ENCODE measurements at regions of chr9 and their contacts with region 1.

Region 1: DNA sequence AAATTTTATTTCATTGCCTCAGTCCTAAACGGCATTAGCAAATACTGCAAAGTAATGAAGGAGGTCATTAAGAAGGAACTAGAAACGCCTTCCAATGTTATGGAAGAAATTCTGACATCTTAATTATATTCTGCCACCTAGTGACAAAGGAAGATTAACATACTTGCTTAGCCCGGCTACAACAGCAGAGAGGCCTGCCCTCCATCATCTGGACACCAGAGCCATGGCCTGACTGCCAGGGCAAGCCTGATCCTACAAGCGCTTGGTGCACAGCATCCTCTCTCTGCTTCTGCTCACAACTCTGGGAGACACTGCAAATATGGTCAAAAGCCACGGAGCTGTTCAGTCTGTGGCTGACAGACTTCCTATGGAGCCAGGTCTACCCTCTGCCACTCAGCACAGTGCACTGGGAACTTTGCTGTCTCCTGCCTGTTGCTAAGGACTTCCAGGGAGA is 87.3 kb upstream of the SLC44A1 start:
- DNase-seq: peak; percentile 67
- H3K4me3 Mint-ChIP-seq: no peak overlapping the region
- H3K27ac Mint-ChIP-seq: no peak overlapping the region
- H3K4me1 Mint-ChIP-seq: peaks cover 9% of the 10 kb centered on the region
- H3K27me3 Mint-ChIP-seq: no peaks in the 10 kb centered on the region
- CTCF ChIP-seq: peak; percentile 51

Region 2: GRCh38 chr9:104780799-104781395 is 376.3 kb before region 1 on chr9:
- CTCF ChIA-PET with region 1: interaction called, 17 read pairs
- POLR2A ChIA-PET with region 1: interaction called, 7 read pairs
- intact Hi-C with region 1: loop called (anchors 1 kb)
- DNase-seq: peak; percentile 71
- H3K4me3 Mint-ChIP-seq: no peak overlapping the region
- H3K27ac Mint-ChIP-seq: no peak overlapping the region
- H3K4me1 Mint-ChIP-seq: no peaks in the 10 kb centered on the region
- H3K27me3 Mint-ChIP-seq: no peaks in the 10 kb centered on the region
- CTCF ChIP-seq: peak; percentile 45

Region 3: DNA sequence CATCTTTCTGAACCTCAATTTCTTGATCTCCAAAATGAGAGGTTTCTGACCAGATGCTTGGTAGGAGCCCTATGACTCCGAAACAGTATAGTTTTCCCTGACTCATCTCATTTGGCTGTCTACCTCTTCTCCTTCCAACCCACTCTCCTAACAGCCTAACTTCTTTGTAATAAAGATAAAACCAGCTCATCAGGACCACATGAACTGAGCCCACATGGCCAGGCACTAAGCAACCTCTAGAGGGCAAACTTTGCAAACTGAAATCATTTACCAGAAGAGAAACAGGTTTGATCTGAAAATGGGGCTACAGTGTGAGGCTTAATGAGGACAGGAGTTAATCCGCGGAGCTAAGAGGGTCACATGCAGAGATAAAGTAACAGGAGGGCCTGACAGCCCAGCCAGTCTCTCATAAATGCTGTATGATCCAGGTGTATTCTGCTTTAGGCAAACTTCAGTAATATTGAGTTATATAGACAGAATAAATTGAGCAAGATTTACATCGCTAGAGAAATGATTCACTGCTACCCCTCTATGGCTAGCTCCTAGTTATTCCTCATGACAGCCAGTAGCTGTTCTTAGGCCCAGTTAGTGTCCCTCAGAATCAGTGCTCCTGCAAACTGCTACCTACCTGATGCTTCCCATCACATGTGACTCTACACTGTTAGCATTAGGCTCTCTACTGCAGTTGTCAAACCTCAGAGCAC is 293.8 kb before region 1 on chr9:
- CTCF ChIA-PET with region 1: interaction called, 115 read pairs
- POLR2A ChIA-PET with region 1: interaction called, 9 read pairs
- intact Hi-C with region 1: loop called (anchors 1 kb)
- DNase-seq: peak; percentile 83
- H3K4me3 Mint-ChIP-seq: no peak overlapping the region
- H3K27ac Mint-ChIP-seq: no peak overlapping the region
- H3K4me1 Mint-ChIP-seq: peaks cover 11% of the 10 kb centered on the region
- H3K27me3 Mint-ChIP-seq: no peaks in the 10 kb centered on the region
- CTCF ChIP-seq: peak; percentile 74

Region 4: DNA sequence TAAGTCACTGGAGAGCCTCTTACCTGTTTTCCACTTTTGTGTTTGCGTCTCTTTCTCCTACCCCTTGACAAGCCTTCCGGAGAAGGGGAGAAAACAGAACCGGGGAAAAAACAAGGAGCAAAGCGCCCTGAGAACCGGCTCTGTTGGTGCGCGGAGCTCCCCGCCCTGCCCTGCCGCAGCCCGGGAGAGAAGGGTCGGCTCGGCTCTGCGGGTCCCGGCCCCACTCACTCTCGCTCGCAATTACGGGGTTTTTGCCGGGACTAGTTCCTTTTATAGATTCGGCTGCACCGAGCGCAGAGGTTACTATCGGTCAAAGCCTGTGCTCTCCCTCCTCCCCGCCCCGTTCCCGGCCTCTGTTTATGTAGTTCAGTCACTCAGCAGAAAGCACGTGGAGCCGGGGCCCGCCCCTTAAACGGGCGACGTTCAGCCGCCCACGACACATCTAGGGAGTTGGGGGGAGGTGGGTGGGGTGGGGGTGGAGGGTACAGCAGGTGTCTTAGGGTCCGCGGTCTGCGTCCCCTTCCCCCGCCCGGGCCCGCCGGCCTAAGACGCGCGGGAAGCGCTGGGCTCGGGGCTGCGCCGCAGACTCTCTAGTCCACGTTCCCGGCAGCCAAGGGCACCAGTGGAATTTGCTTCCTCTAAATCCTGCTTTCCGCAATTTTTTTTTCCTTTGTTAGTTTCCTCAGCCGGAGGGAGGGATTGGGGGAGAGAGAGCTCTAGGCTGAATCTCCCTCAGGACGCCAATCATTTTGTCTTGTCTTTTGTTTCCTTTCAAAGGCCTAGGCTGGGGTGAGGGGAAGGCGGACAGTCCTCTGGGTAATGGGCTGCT is 229.0 kb before region 1 on chr9 and contains the start of gene ABCA1:
- CTCF ChIA-PET with region 1: interaction called, 3 read pairs
- POLR2A ChIA-PET with region 1: no interaction called
- intact Hi-C with region 1: loop called (anchors 1 kb)
- DNase-seq: peak; percentile 46
- H3K4me3 Mint-ChIP-seq: peak within 1 kb of the TSS; percentile 68
- H3K27ac Mint-ChIP-seq: no peak within 1 kb of the TSS
- H3K4me1 Mint-ChIP-seq: peaks cover 3% of the 10 kb centered on the region
- H3K27me3 Mint-ChIP-seq: no peaks in the 10 kb centered on the region
- CTCF ChIP-seq: no peak
- total RNA-seq, gene ABCA1: 0.15 and 0.28 TPM in 2 replicates

Region 5: DNA sequence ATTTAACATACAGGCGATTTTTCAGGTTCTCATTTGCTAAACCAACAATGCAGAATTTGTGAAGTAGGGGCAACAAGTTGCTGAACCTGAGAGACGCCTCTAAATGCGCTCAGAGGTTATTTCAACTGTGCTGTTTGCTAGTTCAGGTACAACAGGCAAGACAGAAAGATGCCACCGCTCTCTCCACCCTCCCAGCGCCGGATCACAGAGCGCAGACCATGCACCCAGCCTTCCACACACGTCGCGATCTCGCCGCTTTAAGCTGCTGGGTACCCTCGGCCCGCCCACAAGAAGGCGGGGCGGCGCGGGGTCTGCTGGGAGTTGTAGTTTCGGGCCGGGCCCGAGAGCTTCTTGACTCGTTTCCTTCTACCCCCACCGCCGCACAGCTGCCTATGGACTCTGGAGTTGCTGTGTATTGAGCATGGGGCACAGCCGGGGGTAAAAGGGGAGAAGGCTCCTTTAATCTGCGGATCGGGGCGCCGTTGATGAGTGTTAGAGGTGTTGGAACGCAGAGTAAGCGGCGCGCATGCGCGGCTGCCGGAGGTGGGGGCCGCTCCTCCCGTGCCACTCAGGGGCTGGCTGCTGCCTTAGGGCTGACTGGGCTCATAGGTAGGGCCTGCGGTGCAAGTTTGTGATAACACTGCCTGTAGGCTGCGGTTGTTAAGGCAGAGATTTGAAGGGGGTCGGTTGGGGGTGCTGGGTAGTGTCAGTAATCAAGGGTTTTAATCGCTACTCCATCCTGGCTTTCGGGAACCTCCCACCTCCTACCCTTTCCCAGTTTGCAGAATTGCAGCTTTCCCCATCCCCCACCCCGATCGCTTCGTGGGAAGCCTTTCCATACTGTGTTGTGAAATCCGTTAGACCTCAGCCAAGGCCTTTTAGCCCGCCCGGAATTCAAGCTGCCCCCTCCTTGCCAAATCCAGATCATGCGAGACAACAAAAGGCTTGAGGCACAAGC is 188.9 kb before region 1 on chr9:
- CTCF ChIA-PET with region 1: interaction called, 3 read pairs
- POLR2A ChIA-PET with region 1: no interaction called
- intact Hi-C with region 1: loop called (anchors 1 kb)
- DNase-seq: peak; percentile 93
- H3K4me3 Mint-ChIP-seq: peak overlapping the region; percentile 82
- H3K27ac Mint-ChIP-seq: peak overlapping the region; percentile 82
- H3K4me1 Mint-ChIP-seq: peaks cover 16% of the 10 kb centered on the region
- H3K27me3 Mint-ChIP-seq: no peaks in the 10 kb centered on the region
- CTCF ChIP-seq: no peak

Region 6: GRCh38 chr9:105044483-105044882 is 112.7 kb before region 1 on chr9:
- CTCF ChIA-PET with region 1: no interaction called
- POLR2A ChIA-PET with region 1: no interaction called
- intact Hi-C with region 1: no loop called
- DNase-seq: no peak
- H3K4me3 Mint-ChIP-seq: no peak overlapping the region
- H3K27ac Mint-ChIP-seq: no peak overlapping the region
- H3K4me1 Mint-ChIP-seq: no peaks in the 10 kb centered on the region
- H3K27me3 Mint-ChIP-seq: no peaks in the 10 kb centered on the region
- CTCF ChIP-seq: no peak

Region 7: GRCh38 chr9:105064315-105065097 is 92.7 kb before region 1 on chr9:
- CTCF ChIA-PET with region 1: interaction called, 4 read pairs
- POLR2A ChIA-PET with region 1: interaction called, 8 read pairs
- intact Hi-C with region 1: loop called (anchors 2 kb)
- DNase-seq: peak; percentile 97
- H3K4me3 Mint-ChIP-seq: peak overlapping the region; percentile 47
- H3K27ac Mint-ChIP-seq: peak overlapping the region; percentile 92
- H3K4me1 Mint-ChIP-seq: peaks cover 16% of the 10 kb centered on the region
- H3K27me3 Mint-ChIP-seq: no peaks in the 10 kb centered on the region
- CTCF ChIP-seq: no peak

Region 8: GRCh38 chr9:105399117-105399516 is 242.0 kb after region 1 on chr9:
- CTCF ChIA-PET with region 1: interaction called, 8 read pairs
- POLR2A ChIA-PET with region 1: no interaction called
- intact Hi-C with region 1: loop called (anchors 5 kb)
- DNase-seq: no peak
- H3K4me3 Mint-ChIP-seq: no peak overlapping the region
- H3K27ac Mint-ChIP-seq: no peak overlapping the region
- H3K4me1 Mint-ChIP-seq: no peaks in the 10 kb centered on the region
- H3K27me3 Mint-ChIP-seq: no peaks in the 10 kb centered on the region
- CTCF ChIP-seq: no peak